Activated CD4-positive, alpha-beta T cell treated with anti-CD3 and anti-CD28 coated beads, Interleukin-2, amount 10 ng/mL, durations not matched to agents 24 days and 14 days (primary cell): ENCODE measurements at regions of chr6 and their contacts with region 1.

Region 1: DNA sequence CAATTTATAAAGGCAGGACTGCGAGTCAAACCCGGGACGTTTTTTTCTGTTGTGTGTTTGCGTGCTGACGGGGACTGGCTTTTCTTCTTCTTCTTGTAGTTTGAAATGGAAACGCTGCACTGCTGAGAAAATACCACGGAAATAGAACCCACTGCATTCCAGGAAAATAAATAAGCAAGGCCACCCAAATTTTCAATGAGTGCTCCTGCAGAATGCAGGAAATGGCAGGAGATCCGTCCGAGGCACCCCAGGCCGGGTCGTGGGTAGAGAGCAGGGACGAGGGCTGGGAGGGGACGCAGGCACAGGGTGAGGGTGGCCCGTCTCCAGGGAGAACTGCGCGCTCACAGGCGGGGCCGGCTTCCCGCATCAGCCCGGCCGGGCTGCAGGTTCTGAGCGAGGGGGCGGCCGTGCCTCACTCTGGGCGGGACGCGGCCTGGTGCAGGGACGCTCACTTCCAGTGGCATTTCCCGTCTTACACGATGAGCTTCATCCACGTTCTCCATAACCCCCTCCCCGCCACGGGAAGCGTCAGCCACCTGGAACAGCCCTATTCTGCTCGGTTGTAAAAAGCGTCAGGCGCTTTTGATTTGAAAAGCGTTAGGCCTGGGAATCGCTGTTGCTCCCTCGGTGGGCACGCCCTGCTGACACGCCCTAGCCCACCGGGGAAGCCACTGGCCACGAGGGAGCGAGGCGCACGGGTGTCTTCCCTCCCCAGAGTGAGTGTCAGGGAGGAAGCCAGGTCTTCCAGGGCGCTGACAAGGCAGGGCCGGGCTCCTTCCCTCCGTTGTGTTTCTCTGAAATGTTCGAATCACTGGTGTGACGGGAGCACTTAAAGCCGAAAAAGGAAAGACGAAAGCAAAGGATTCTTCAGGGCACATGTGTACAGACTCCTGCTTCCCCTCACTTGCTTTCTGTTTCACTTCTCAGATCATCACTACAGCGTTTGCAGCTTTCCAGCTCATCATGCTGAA is 17.9 kb upstream of the EXOC2 start:
- DNase-seq: peak; percentile 91
- H3K4me3 Mint-ChIP-seq: peak overlapping the region; percentile 98
- H3K27ac Mint-ChIP-seq: peak overlapping the region; percentile 100
- H3K4me1 Mint-ChIP-seq: peaks cover 43% of the 10 kb centered on the region
- H3K27me3 Mint-ChIP-seq: no peaks in the 10 kb centered on the region

Region 2: DNA sequence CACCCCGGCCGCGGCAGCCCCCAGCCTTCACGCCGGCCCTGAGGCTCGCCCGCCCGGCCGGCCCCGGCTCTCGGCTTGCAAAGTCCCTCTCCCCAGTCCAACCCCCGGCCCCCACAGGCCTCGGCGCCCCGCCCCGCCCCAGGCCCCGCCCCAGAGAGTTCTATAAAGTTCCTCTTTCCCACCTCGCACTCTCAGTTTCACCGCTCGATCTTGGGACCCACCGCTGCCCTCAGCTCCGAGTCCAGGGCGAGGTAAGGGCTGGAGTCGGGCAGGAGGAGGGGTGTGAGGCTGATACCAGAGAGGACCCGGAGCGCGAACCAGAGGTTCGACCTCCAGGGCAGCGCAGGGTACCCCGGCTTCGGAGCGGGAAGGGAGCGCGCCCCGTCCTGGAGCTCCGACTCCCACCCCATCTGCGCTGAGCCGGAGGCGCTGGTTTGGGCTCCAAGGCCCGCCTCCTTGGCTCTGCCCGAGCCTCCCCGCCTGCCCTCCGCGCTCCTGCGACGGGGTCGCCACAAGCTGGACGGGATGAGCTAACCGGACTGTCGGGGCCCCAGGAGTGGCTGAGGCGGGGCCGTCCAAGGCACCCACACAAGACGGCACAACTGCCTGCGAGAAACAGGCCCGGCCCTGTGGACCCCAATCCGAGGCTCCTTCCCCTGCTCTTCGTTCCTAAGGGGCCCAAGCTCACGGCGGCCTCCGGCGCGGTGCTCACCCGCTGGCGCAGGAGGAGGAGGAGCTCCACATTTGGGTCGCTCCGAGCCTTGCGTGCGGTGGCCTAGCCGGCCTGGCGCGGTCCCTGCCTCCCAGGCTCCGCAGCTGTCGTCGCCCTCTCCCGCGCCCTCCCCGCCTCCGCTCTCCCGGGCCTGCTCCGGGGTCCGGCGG is 319.1 kb before region 1 on chr6 and contains the start of gene IRF4:
- intact Hi-C with region 1: loop called (anchors 2 kb)
- DNase-seq: peak; percentile 92
- H3K4me3 Mint-ChIP-seq: peak within 1 kb of the TSS; percentile 93
- H3K27ac Mint-ChIP-seq: peak within 1 kb of the TSS; percentile 98
- H3K4me1 Mint-ChIP-seq: peaks cover 40% of the 10 kb centered on the region
- H3K27me3 Mint-ChIP-seq: peaks cover 2% of the 10 kb centered on the region
- total RNA-seq, gene IRF4: 831 and 846 TPM in 2 replicates

Region 3: GRCh38 chr6:593139-593906 is 117.6 kb before region 1 on chr6:
- intact Hi-C with region 1: loop called (anchors 5 kb)
- DNase-seq: peak; percentile 90
- H3K4me3 Mint-ChIP-seq: no peak overlapping the region
- H3K27ac Mint-ChIP-seq: peak overlapping the region; percentile 43
- H3K4me1 Mint-ChIP-seq: peaks cover 16% of the 10 kb centered on the region
- H3K27me3 Mint-ChIP-seq: no peaks in the 10 kb centered on the region

Region 4: DNA sequence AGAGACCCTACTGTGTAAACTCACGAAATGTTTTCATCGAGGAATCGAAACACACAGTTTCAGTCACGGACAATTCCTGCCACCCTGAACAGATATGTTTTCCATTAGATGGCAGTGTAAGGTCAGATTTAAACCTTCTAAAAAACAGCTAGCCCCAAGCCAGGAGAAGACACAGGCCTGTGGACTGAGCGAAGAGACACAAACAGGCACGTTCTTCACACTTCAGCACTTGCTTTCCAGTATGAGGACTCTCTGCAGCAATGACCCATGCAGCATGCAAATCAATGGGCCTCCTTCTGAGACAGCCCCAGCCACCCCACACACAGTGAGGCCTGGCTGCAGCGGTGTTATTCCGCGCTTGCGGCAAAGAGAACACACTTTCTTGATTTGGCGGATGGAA is 85.9 kb before region 1 on chr6:
- intact Hi-C with region 1: no loop called
- DNase-seq: peak; percentile 50
- H3K4me3 Mint-ChIP-seq: no peak overlapping the region
- H3K27ac Mint-ChIP-seq: no peak overlapping the region
- H3K4me1 Mint-ChIP-seq: peaks cover 19% of the 10 kb centered on the region
- H3K27me3 Mint-ChIP-seq: no peaks in the 10 kb centered on the region

Region 5: GRCh38 chr6:692855-693722 is 17.8 kb before region 1 on chr6 and contains the start of gene EXOC2:
- intact Hi-C with region 1: loop called (anchors 1 kb)
- DNase-seq: peak; percentile 97
- H3K4me3 Mint-ChIP-seq: peak within 1 kb of the TSS; percentile 98
- H3K27ac Mint-ChIP-seq: peak within 1 kb of the TSS; percentile 95
- H3K4me1 Mint-ChIP-seq: peaks cover 26% of the 10 kb centered on the region
- H3K27me3 Mint-ChIP-seq: no peaks in the 10 kb centered on the region
- total RNA-seq, gene EXOC2: 43.6 and 44.1 TPM in 2 replicates

Region 6: DNA sequence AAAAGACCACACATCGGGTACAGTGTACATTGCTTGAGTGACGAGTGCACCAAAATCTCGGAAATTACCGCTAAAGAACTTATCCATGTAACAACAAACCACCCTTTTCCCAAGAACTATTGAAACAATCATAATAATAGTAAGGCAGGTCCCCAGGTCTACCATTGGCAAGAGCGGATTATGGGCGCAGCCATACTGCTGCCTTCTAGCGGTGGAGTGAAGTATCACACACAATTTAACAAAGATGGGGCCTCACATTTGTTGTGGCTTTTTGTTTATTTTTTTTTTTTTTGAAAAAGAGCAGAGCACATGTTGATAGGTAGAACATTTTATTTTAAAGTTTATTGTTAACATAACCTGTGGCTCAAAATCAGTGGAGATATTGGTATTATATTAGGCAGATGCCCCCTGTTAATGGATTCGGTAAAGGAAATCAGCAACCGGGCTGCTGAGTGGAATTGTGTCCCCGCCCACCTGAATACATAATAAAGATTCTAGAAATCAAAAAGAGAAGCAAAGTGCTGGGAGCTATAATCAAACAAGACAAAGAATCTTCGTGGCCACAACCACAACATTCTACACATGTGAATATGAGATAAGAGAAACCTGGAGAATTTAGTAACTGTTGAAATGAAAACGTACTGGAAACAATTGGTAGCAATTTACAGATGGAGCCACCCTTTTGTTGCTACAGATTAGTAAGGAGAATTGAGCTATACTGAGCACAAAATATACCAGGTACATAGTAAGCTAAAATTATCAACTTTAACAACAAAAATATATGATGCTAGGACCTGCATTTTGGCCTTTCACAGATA is 76.3 kb after region 1 on chr6:
- intact Hi-C with region 1: loop called (anchors 5 kb)
- DNase-seq: peak; percentile 68
- H3K4me3 Mint-ChIP-seq: no peak overlapping the region
- H3K27ac Mint-ChIP-seq: peak overlapping the region; percentile 81
- H3K4me1 Mint-ChIP-seq: peaks cover 16% of the 10 kb centered on the region
- H3K27me3 Mint-ChIP-seq: peaks cover 10% of the 10 kb centered on the region